Activated CD4-positive, alpha-beta T cell treated with anti-CD3 and anti-CD28 coated beads for 36 hours (primary cell): ENCODE measurements at regions of chr19 and their contacts with region 1.

Region 1: DNA sequence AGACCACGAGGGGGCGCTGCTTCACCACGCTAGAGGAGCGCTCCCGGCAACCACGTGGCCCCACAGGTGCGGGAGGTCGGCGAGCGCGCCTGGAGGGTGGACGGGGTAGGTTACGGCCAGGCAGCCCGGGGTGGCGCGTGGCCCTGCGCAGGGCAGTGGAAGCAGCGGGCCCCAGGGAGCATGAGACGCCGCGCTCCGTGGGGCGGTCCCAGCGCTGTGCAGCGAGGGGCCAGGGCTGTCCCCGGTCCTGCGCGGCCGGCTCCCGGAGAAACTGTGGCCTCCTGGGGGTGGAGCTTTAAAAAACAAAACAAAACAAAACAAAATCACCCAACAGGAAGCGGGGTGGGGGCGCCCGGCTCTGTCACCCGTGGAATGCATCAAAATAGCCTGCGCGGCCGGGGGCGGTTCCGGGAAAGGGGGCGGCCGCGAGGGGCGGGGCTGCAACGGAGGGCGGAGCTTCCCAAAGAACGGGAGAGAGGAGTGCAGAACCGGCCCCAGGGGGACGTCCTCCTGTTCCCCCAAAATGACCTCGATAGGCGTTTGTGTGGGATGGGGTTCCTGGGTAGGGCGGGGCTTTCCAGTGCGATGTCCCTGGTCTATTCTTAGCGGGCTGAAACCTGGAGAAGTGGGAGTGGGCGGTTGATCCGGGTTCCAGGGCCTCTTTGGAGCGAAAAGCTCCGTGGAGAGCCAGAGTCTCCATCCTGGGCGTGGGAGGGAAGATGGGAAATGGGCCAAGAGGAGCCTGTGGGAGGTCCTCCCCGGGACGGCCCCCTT is 27.3 kb downstream of the NUMBL start:
- DNase-seq: peak; percentile 96
- ATAC-seq: peak; percentile 81
- H3K4me3 Mint-ChIP-seq: peak overlapping the region; percentile 66
- H3K27ac Mint-ChIP-seq: peak overlapping the region; percentile 77
- H3K4me1 Mint-ChIP-seq: peaks cover 19% of the 10 kb centered on the region
- H3K27me3 Mint-ChIP-seq: no peaks in the 10 kb centered on the region

Region 2: DNA sequence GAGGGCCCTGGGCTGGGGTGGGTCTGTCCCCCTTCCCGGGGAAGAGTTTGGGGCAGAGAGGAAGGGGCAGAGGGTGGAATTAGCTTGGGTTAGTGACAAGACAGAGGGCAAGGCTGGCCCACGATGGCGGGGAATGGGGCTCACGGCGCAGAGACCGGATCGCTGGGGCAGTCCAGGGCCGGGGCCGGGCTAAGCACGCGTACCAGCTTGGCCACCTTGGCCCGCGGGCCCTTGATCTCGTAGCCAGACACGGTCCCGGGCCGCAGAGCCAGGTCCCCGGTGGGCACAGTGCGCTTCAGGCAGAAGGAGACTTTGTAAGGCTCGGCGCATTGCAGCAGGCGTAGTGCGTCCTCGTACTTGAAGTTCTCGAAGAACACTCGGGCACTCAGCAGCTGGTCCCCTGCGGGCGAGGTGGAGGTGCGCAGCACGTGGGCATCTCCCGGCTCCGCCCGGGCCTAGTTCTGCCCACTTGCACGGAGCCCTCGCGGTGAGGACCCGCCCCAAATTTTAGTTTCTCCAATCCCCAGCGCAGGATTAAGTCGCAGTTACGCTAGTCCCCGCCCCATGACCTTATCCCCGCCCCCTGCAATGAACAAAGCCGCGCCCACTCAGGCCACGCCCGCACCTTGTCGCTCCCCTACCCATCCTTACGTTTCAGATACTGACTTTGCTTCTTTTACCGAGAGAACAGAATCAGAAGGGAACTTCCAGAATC is 264.5 kb before region 1 on chr19:
- CTCF ChIA-PET with region 1: no interaction called
- POLR2A ChIA-PET with region 1: no interaction called
- intact Hi-C with region 1: no loop called
- DNase-seq: peak; percentile 85
- ATAC-seq: peak; percentile 84
- H3K4me3 Mint-ChIP-seq: no peak overlapping the region
- H3K27ac Mint-ChIP-seq: no peak overlapping the region
- H3K4me1 Mint-ChIP-seq: peaks cover 16% of the 10 kb centered on the region
- H3K27me3 Mint-ChIP-seq: no peaks in the 10 kb centered on the region

Region 3: GRCh38 chr19:40798223-40798996 is 135.3 kb after region 1 on chr19:
- CTCF ChIA-PET with region 1: interaction called, 12 read pairs
- POLR2A ChIA-PET with region 1: interaction called, 3 read pairs
- intact Hi-C with region 1: no loop called
- DNase-seq: peak; percentile 100
- ATAC-seq: peak; percentile 82
- H3K4me3 Mint-ChIP-seq: peak overlapping the region; percentile 91
- H3K27ac Mint-ChIP-seq: peak overlapping the region; percentile 97
- H3K4me1 Mint-ChIP-seq: peaks cover 49% of the 10 kb centered on the region
- H3K27me3 Mint-ChIP-seq: no peaks in the 10 kb centered on the region

Region 4: GRCh38 chr19:40813182-40813958 is 150.3 kb after region 1 on chr19:
- CTCF ChIA-PET with region 1: interaction called, 50 read pairs
- POLR2A ChIA-PET with region 1: no interaction called
- intact Hi-C with region 1: no loop called
- DNase-seq: no peak
- ATAC-seq: no peak
- H3K4me3 Mint-ChIP-seq: no peak overlapping the region
- H3K27ac Mint-ChIP-seq: no peak overlapping the region
- H3K4me1 Mint-ChIP-seq: peaks cover 33% of the 10 kb centered on the region
- H3K27me3 Mint-ChIP-seq: peaks cover 3% of the 10 kb centered on the region

Region 5: DNA sequence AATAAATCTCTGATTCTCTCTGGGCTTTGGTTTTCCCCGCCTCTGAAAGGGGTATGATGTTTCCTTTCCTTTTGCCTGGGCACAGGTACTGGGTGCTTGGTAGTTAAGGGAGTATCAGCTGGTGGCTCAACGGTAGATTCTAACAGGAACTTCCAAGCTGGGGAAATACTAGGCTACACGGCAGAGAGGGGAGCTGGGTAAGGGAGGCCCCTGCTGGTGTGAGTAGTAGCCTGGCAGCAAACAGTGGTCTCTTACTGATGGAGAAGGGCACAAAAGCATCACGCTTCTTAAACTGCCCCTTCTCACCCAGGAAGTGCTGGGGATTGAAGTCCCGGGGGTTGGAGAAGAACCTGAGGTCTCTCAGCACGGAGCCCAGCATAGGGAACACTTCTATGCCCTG is 245.9 kb after region 1 on chr19:
- CTCF ChIA-PET with region 1: interaction called, 3 read pairs
- POLR2A ChIA-PET with region 1: no interaction called
- intact Hi-C with region 1: loop called (anchors 1 to 5 kb)
- DNase-seq: peak; percentile 69
- ATAC-seq: peak; percentile 72
- H3K4me3 Mint-ChIP-seq: peak overlapping the region; percentile 62
- H3K27ac Mint-ChIP-seq: no peak overlapping the region
- H3K4me1 Mint-ChIP-seq: peaks cover 13% of the 10 kb centered on the region
- H3K27me3 Mint-ChIP-seq: peaks cover 19% of the 10 kb centered on the region